HepG2 (cell line): ENCODE measurements at regions of chr18 and their contacts with region 1.

Region 1: DNA sequence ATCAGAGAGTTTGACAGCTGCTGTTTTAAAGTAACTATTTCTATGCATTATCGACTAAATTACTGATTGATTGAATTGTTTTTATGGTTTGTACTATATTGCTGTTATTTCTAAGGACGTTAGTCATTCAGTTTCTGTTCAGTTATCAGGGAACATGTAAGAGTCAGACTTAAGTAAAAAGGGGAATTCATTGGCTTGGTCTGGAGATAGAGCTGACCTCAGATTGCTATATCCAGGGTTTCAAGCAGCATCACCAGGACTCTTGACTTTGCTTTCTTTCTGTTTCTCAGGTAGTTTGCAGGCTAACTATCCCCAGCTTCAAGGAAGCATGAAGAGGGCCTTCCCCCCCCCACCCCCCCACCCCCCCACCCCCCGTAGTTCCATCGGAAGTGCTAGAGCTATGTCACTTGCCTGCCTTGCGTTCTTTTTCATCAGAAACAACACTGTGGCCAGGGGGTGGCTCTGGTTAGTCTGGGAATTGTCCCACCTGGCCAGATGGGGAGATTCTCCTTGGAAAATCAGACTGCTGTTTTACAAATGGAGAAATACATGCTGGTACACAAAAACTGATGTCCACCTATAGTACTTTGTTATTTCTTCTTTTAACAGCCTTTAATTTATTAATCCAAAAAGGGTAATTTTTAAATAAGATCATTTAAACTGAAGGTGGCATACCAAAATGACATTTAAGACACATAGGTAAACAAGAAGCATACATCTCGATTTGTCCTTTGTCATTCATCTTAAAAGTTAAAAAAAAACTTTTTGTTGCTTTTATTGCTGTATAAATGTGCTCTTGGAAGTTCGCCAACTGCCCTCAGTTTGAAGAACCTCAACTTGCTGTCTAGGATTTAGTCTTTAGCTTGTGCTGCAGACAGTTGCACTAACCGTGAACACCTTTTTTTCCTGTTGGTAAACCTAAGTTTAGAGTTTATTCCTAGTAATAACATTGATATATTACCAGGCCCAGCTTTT is 9.4 kb downstream of the SMAD4 start:
- DNase-seq: no peak
- ATAC-seq: peak; percentile 37; the same call in 2 of the 3 replicates
- H3K4me3 ChIP-seq: no peak overlapping the region
- H3K27ac ChIP-seq: peak overlapping the region; percentile 78
- H3K4me1 ChIP-seq: peaks cover 66% of the 10 kb centered on the region
- H3K27me3 ChIP-seq: no peaks in the 10 kb centered on the region
- CTCF ChIP-seq: no peak
- EP300 ChIP-seq: no peak
- POLR2A ChIP-seq: no peak
- RAD21 ChIP-seq: no peak

Region 2: GRCh38 chr18:50973367-50974126 is 65.9 kb before region 1 on chr18:
- CTCF ChIA-PET with region 1: no interaction called
- POLR2A ChIA-PET with region 1: interaction called, 21 read pairs
- in situ Hi-C with region 1: loop called (anchors 5 kb)
- intact Hi-C with region 1: loop called (anchors 2 kb)
- DNase-seq: peak; percentile 90
- ATAC-seq: peak; percentile 98
- H3K4me3 ChIP-seq: no peak overlapping the region
- H3K27ac ChIP-seq: peak overlapping the region; percentile 16
- H3K4me1 ChIP-seq: peaks cover 33% of the 10 kb centered on the region
- H3K27me3 ChIP-seq: no peaks in the 10 kb centered on the region; a peak in 1 of 5 replicates
- CTCF ChIP-seq: no peak
- EP300 ChIP-seq: peak; percentile 59 to 81; a peak in 2 of 4 replicates
- POLR2A ChIP-seq: no peak
- RAD21 ChIP-seq: no peak